ENCODE measurements at regions of chr14 and their contacts with region 1.

Region 1: DNA sequence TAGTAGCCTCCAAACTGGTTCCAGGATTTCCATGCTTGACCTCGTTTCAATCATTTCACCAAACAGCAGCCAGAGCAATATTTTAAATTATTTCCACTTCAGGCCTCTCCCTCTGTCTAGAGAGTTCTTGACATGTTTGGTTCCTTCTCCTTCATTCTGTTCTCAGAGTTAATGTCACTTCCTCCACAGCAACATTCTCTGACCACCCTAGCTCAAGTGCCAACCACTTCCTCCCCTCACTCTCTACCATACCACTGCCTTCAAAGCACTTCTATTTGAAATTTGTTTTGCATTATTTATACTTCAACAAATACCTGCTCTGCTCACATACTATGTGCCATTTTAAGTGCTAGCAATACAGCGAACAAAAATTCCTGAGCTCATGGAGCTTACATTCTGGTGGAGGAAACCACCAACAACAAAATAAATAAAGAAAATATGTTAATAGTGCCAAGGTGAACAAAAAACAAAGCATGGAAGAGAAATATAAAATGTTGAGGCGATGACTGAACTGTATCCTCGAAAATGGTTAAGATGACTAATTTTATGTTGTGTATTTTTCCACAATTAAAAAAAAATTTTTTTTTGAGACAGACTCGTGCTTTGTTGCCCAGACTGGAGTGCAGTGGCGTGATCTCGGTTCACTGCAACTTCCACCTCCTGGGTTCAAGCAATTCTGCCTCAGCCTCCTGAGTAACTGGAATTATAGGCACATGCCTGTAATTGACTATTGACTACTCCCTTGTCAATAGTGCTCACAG is 17.3 kb downstream of the BAZ1A start:
- DNase-seq: no peak
- ATAC-seq: peak; percentile 92
- H3K4me3 Mint-ChIP-seq: peak overlapping the region; percentile 66
- H3K27ac Mint-ChIP-seq: peak overlapping the region; percentile 81
- H3K4me1 Mint-ChIP-seq: peaks cover 33% of the 10 kb centered on the region
- H3K27me3 Mint-ChIP-seq: no peaks in the 10 kb centered on the region

Region 2: DNA sequence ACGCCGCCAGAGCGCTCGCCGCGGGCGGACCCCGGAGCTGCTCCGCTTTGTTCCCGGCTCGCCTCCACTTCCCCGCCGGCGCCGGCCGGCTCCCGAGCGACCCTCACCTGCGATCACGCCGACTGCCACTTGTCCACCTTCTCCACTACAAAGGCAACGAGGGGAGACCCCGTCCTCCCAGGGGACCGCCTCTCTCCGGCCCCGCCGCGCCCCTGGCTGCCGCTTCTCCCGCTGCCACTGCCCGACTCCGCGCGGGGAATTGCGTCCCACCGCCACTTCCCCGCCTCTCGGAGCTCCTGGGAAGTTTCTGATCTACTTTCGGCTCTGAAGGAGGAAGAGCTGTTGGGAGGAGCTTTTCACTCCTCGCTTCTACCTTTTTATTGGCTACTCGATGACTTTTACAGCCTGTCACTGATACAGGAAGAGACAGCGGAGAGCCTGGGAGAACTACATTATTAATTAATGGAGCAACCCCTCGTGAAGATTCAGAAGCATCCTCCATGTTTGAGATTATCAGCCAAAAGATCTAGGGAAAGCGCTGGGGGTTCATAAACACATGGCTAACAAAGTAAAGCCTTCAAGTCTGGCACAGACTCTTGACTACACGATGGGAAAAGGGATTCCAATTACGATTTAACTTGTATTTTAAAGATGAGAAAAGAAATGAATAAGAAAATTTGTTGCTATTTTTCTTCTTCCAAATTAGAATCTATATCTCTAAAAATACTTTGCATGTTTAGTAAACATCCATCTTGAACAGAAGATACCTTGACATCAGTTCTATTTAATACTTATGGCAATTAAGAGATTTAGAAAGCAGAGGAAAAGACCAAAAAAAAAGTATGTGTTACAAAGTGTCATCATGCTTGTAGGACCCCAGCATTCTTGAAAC is 17.4 kb after region 1 on chr14 and contains the start of gene BAZ1A:
- POLR2A ChIA-PET with region 1: interaction called, 12 read pairs
- DNase-seq: peak; percentile 71
- ATAC-seq: peak; percentile 20
- H3K4me3 Mint-ChIP-seq: peak within 1 kb of the TSS; percentile 99
- H3K27ac Mint-ChIP-seq: peak within 1 kb of the TSS; percentile 99
- H3K4me1 Mint-ChIP-seq: peaks cover 29% of the 10 kb centered on the region
- H3K27me3 Mint-ChIP-seq: no peaks in the 10 kb centered on the region
- total RNA-seq, gene BAZ1A: 46.1 to 51.8 TPM

Measured in activated naive CD8-positive, alpha-beta T cell treated with anti-CD3 and anti-CD28 coated beads, Interleukin-2, amount 10 ng/mL, durations not matched to agents 7 days and 5 days (primary cell).